ENCODE measurements at regions of chr3 and their contacts with region 1.

Region 1: DNA sequence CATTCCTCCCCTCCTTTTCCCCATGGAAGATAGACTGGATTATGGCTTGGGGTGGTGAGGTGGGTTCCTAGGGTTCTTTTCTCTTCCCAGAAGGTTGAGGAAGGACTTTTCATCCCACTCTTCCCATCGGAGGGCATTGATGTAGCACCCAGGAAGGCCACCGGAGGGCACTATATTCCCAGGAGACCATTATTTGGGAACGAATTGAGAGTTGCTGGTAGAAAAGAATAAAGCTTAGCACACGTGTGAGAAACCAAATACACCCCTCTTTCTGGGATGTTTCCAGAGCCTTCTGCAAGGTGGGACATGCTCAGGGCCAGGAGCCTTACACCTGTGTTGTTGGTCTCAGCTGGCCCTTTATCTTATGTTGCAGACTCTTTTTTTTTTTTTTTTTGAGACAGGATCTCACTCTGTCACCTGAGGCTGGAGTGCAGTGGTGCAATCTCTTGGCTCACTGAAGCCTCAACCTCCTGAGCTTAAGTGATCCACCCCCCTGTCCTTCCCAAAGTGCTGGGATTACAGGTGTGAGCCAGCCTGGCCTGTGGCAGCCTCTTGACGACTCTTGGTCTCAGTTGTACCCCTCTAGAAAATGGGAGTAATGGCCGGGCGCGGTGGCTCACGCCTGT is 6.3 kb upstream of the CDC25A start:
- DNase-seq: no peak
- H3K4me3 ChIP-seq: no peak overlapping the region
- H3K27ac ChIP-seq: no peak overlapping the region
- H3K27me3 ChIP-seq: no peaks in the 10 kb centered on the region
- CTCF ChIP-seq: peak; percentile 86

Region 2: DNA sequence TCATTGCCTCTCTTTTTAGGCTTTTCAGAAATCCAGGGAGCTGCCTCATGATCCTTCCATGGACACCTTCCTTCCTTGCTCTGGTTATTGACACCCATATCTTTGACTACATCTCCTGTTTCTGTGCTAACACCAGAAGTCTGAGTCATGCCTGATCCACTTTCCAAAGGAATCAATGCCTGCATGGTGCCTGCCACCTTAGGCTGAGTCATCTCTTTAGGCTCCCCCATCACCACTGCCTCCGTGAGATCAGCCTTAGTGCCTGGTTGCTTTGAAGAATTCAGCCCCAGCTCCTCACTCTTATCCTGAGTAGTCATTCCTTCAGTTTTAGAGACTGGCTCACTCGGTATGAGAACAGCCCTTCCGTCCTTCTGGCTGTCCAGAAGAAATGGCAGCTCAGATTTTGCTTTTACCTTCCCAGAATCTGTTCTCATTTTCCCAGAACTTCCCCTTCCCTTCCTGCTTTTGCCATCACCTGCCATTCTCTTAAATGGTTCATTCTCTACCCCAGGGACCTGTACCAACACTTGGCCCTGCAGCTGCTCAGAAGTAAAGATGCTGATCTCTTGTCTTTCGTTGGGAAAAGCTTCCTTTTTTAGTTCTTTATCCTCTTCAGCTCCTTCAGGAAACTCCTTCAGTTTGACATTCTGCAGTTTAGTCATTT is 283.6 kb before region 1 on chr3:
- CTCF ChIA-PET with region 1: no interaction called
- POLR2A ChIA-PET with region 1: no interaction called
- DNase-seq: peak; percentile 70
- H3K4me3 ChIP-seq: no peak overlapping the region
- H3K27ac ChIP-seq: peak overlapping the region; percentile 77
- H3K27me3 ChIP-seq: no peaks in the 10 kb centered on the region
- CTCF ChIP-seq: no peak

Region 3: DNA sequence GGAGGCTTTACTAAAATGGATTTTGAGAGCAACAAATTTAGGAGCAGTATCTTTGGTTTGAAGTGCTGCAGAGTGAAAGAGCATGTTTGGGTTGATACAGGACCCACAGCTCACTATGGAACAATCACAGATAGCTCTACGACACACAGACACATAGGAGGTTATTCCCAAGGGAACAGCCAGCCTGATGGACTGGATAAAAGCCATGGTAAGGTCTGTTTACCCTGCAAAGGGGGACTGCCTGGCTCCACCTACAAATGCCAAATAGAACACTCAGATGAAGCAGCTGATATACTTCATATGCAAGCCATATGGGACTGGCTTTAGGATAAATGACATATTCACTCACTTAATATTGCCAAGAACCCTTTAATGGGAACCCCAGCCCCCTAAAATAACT is 81.7 kb before region 1 on chr3:
- CTCF ChIA-PET with region 1: no interaction called
- POLR2A ChIA-PET with region 1: no interaction called
- DNase-seq: no peak
- H3K4me3 ChIP-seq: no peak overlapping the region
- H3K27ac ChIP-seq: no peak overlapping the region
- H3K27me3 ChIP-seq: no peaks in the 10 kb centered on the region
- CTCF ChIP-seq: no peak

Region 4: DNA sequence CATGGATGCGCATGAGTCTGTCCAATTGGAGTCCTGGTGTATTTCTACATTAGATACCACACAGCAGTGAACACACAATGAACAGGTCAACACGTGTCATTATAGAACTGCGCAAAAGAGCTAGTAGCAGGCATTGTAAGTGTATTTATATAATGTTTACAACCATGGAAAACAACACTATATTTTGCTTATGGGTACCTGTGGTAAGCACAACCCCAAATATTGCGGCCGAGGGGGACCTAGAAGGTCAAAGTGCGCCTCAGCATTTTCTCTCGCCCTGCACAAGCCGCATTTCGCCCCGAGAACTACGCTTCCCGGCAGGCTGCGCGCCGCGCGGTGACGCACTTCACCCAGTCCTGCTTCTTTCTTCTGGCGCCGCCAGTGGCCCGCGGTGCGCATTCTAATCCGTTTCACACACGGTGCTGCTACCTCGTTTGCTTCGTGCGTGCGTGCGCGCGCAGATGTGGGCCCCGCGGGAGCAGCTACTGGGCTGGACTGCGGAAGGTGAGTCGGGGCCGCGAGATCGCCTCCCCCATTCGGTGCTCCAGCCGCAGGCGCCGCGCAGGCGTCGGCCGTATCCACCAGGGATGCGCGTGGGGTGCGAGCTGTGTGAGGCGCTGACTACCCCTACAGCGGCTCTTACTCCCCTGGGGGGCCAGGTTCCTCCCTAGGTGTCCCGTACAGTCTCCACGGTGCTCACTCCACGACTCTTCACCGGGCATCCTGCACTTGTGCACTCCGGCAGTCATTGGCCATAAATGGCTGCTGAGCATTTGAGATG is 46.3 kb after region 1 on chr3 and contains the start of gene ZNF589:
- CTCF ChIA-PET with region 1: interaction called, 13 read pairs
- POLR2A ChIA-PET with region 1: interaction called, 3 read pairs
- DNase-seq: peak; percentile 63
- H3K4me3 ChIP-seq: peak within 1 kb of the TSS; percentile 94
- H3K27ac ChIP-seq: peak within 1 kb of the TSS; percentile 47
- H3K27me3 ChIP-seq: no peaks in the 10 kb centered on the region
- CTCF ChIP-seq: peak; percentile 26; the same call in 1 of the 2 replicates
- polyA plus RNA-seq, gene ZNF589: 3.3 TPM in 2 replicates

Region 5: DNA sequence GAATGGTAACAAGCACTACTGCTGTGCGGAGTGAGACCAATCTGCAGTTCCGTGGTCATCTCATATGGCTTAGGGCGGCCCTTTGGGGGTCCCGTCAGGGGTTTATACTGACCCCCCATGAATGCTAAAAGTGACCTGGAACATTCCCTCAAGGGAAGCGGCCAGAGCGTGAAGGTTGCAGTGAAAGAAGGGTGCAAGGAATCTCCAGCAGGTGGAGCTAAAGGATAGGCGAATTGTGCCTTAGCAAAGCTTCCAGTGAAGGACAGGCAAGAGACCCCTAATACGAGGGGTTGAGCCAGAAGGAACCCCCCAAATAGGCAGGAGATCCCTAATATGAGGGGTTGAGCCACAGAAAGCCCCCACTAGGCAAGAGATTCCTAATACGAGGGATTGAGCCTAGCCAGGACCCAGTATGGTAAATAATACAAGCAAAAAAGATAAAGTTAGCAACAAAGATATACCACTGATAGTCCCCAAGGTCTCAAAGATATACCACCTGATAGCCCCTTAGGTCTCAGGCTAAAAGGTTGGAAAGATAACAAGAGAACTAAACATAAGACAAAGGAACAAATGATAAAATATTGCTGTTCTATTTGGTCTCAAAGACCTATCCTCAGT is 79.1 kb after region 1 on chr3:
- CTCF ChIA-PET with region 1: interaction called, 12 read pairs
- POLR2A ChIA-PET with region 1: interaction called, 8 read pairs
- DNase-seq: peak; percentile 13
- H3K4me3 ChIP-seq: no peak overlapping the region
- H3K27ac ChIP-seq: no peak overlapping the region
- H3K27me3 ChIP-seq: no peaks in the 10 kb centered on the region
- CTCF ChIP-seq: peak; percentile 84

Region 6: GRCh38 chr3:48367201-48367600 is 172.6 kb after region 1 on chr3:
- CTCF ChIA-PET with region 1: no interaction called
- POLR2A ChIA-PET with region 1: no interaction called
- DNase-seq: no peak
- H3K4me3 ChIP-seq: no peak overlapping the region
- H3K27ac ChIP-seq: no peak overlapping the region
- H3K27me3 ChIP-seq: peaks cover 14% of the 10 kb centered on the region
- CTCF ChIP-seq: no peak

Measured in AG04450 (cell line).